Activated CD4-positive, alpha-beta memory T cell treated with anti-CD3 and anti-CD28 coated beads, Interleukin-2, amount 10 ng/mL, durations not matched to agents 7 days and 5 days (primary cell): ENCODE measurements at regions of chr16 and their contacts with region 1.

Region 1: DNA sequence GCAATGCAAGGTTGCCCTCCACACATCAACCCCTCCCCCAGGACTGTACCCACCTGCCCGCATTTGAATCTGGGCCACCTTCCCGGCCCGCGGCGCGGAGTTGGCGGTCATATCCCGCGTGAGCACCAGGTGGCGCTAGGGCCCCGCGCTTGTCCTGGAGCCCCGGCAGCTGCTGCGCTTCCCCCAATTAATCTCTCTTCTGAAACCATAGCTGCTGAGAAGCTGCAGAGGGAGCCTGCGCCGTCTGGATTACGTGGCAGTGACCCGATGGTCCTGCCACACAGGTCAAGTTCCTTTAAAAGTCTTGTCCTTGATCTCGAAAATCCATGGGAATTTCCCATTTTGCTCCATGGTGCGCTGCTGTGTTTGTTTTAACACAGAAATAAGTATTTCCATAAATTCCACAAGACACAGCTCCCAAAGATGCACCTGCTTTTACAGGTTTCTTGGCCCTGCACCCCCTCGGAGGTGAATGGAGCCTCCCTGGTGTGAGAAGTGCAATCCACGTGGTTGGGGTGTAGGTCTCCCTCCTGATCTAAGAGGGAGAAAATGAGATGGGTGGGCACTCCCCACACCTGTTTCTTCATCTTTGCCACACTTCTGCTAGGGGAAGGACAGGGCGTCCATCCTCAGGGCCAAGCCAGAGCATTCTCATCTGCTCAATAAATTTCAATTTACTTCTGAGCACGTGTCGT is 22.1 kb downstream of the COX4I1 start:
- DNase-seq: peak; percentile 73
- H3K4me3 Mint-ChIP-seq: no peak overlapping the region
- H3K27ac Mint-ChIP-seq: no peak overlapping the region
- H3K4me1 Mint-ChIP-seq: peaks cover 3% of the 10 kb centered on the region
- H3K27me3 Mint-ChIP-seq: peaks cover 11% of the 10 kb centered on the region

Region 2: DNA sequence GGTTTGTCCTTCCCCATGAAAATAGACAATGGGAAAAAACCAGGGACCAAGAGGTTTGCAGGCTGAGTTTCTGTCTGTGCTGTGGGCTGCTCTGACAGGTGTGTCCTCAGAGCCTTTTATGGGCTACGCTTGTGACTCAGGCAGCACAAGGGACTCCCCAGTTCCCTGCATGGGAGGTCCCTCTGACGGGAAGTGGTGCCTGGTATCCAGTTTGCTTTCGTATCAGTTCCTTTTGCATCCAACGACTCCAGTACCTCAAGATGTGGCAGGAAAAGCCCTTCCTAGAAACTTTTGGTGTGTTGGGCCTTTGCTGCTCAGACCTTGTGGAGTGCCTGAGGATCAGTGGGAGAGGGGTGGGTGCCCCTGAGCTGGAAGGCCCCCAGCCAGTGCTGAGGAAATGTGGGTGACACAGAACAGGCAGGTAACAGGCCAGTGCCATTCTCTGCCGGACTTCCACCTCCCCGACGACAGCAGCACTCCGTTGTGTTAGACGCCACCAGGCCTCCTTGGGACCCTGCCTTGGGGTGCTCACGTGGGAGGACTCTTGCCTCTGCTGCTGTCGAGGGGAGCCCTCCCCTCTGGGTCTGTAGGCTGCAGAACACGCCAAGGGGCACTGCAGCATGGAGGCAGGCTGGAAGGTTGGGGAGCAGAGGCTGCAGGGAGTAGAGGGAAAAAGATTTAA is 39.0 kb after region 1 on chr16:
- CTCF ChIA-PET with region 1: no interaction called
- POLR2A ChIA-PET with region 1: no interaction called
- DNase-seq: no peak
- H3K4me3 Mint-ChIP-seq: no peak overlapping the region
- H3K27ac Mint-ChIP-seq: no peak overlapping the region
- H3K4me1 Mint-ChIP-seq: no peaks in the 10 kb centered on the region
- H3K27me3 Mint-ChIP-seq: peaks cover 5% of the 10 kb centered on the region

Region 3: GRCh38 chr16:85898521-85899442 is 77.2 kb after region 1 on chr16 and contains the start of gene IRF8:
- CTCF ChIA-PET with region 1: interaction called, 24 read pairs
- POLR2A ChIA-PET with region 1: no interaction called
- DNase-seq: peak; percentile 56
- H3K4me3 Mint-ChIP-seq: peak within 1 kb of the TSS; percentile 62
- H3K27ac Mint-ChIP-seq: no peak within 1 kb of the TSS
- H3K4me1 Mint-ChIP-seq: peaks cover 36% of the 10 kb centered on the region
- H3K27me3 Mint-ChIP-seq: peaks cover 50% of the 10 kb centered on the region
- total RNA-seq, gene IRF8: 4.8 to 4.9 TPM

Region 4: GRCh38 chr16:85986931-85987749 is 165.6 kb after region 1 on chr16:
- CTCF ChIA-PET with region 1: interaction called, 145 read pairs
- POLR2A ChIA-PET with region 1: interaction called, 11 read pairs
- DNase-seq: peak; percentile 28
- H3K4me3 Mint-ChIP-seq: no peak overlapping the region
- H3K27ac Mint-ChIP-seq: no peak overlapping the region
- H3K4me1 Mint-ChIP-seq: peaks cover 33% of the 10 kb centered on the region
- H3K27me3 Mint-ChIP-seq: peaks cover 15% of the 10 kb centered on the region

Region 5: DNA sequence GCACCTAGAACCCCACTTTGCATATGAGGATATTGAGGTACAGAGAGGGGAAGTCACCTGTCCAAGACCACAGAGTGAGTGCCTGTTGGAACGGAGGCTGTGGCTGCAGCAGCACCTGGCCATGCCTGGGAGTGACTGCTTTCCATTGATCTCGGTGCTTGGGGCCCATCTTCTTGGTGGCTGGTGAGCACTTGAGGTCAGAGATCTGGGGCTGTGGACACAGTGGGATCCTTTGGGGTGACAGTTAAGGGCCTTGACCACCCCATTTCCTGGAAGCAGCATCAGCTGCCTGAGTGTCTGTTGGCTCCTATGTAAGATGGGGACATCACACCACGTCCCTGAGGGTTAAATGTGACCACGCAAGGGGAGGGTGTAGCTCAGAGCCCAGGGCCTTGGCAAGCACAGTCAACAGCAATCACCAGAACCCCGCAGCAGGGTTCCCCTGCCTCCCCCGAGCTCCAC is 189.1 kb after region 1 on chr16:
- CTCF ChIA-PET with region 1: interaction called, 52 read pairs
- POLR2A ChIA-PET with region 1: no interaction called
- DNase-seq: no peak
- H3K4me3 Mint-ChIP-seq: no peak overlapping the region
- H3K27ac Mint-ChIP-seq: no peak overlapping the region
- H3K4me1 Mint-ChIP-seq: peaks cover 25% of the 10 kb centered on the region
- H3K27me3 Mint-ChIP-seq: peaks cover 4% of the 10 kb centered on the region

Region 6: DNA sequence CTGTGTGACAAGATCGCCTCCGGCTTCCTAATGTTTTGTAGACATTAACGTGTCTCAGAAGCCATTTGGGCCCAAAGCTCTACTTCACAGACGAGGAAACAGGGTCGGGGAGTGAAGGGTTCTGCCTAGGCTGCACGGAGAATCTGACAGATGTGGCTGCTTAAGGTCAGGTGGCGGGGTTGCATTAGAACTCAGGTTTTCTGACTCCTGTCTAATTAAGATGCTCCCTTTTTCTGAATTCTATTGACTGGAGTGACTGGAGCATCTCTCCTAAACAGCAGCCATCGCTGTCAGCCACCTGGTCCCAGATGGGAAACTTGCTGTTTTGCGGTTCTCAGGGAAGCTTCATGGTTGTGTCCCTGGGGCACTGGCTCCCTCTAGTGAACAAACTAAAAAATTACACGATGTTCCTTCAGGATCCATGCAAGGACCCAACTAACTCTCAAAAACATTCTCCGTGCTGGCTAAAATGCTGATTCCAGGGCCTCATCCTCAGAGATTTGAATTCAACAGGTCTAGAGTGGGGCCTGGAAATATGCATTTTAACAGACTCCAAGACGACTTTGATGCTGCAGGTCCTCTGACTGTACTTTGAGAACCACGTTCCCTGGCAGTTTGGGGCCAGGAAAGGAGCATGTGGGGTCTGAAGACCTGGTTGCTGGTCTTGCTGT is 194.7 kb after region 1 on chr16:
- CTCF ChIA-PET with region 1: interaction called, 52 read pairs
- POLR2A ChIA-PET with region 1: no interaction called
- DNase-seq: peak; percentile 34
- H3K4me3 Mint-ChIP-seq: no peak overlapping the region
- H3K27ac Mint-ChIP-seq: no peak overlapping the region
- H3K4me1 Mint-ChIP-seq: no peaks in the 10 kb centered on the region
- H3K27me3 Mint-ChIP-seq: peaks cover 15% of the 10 kb centered on the region

Region 7: GRCh38 chr16:86022381-86022960 is 200.9 kb after region 1 on chr16:
- CTCF ChIA-PET with region 1: interaction called, 52 read pairs
- POLR2A ChIA-PET with region 1: interaction called, 3 read pairs
- DNase-seq: no peak
- H3K4me3 Mint-ChIP-seq: no peak overlapping the region
- H3K27ac Mint-ChIP-seq: no peak overlapping the region
- H3K4me1 Mint-ChIP-seq: no peaks in the 10 kb centered on the region
- H3K27me3 Mint-ChIP-seq: peaks cover 17% of the 10 kb centered on the region